AG04449 (cell line): ENCODE measurements at regions of chr19 and their contacts with region 1.

Region 1: GRCh38 chr19:40633207-40633606 is 32.0 kb downstream of the LTBP4 start:
- DNase-seq: peak; percentile 26
- H3K4me3 ChIP-seq: no peak overlapping the region
- CTCF ChIP-seq: no peak

Region 2: DNA sequence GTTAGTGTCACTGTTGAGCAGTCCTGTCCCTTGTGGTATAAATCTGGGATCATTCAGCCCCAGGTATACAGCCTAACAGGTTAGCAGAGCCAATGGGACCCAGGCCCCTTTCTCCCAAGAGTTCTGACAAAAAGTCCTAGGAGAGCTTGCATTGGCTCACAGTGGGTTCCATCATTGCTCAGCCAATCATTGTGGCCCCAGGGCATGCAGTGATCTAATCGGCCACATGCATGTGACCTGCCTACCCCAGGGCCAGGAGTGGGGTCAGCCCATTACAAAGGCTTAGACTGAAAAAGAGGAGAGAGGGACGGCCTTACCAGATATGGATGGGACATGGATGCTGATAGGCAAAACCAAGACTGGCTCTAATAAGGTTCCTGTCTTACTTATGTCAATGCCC is 125.3 kb before region 1 on chr19:
- CTCF ChIA-PET with region 1: no interaction called
- POLR2A ChIA-PET with region 1: no interaction called
- DNase-seq: no peak
- H3K4me3 ChIP-seq: no peak overlapping the region
- CTCF ChIP-seq: no peak

Region 3: GRCh38 chr19:40523322-40524047 is 109.7 kb before region 1 on chr19:
- CTCF ChIA-PET with region 1: interaction called, 28 read pairs
- POLR2A ChIA-PET with region 1: no interaction called
- DNase-seq: no peak
- H3K4me3 ChIP-seq: no peak overlapping the region
- CTCF ChIP-seq: peak; percentile 78

Region 4: GRCh38 chr19:40529093-40529954 is 103.9 kb before region 1 on chr19:
- CTCF ChIA-PET with region 1: interaction called, 28 read pairs
- POLR2A ChIA-PET with region 1: no interaction called
- DNase-seq: no peak
- H3K4me3 ChIP-seq: peak overlapping the region; percentile 54
- CTCF ChIP-seq: peak; percentile 97

Region 5: GRCh38 chr19:40598121-40598917 is 34.9 kb before region 1 on chr19:
- CTCF ChIA-PET with region 1: interaction called, 63 read pairs
- POLR2A ChIA-PET with region 1: interaction called, 3 read pairs
- DNase-seq: no peak
- H3K4me3 ChIP-seq: peak overlapping the region; percentile 65
- CTCF ChIP-seq: peak; percentile 97

Region 6: DNA sequence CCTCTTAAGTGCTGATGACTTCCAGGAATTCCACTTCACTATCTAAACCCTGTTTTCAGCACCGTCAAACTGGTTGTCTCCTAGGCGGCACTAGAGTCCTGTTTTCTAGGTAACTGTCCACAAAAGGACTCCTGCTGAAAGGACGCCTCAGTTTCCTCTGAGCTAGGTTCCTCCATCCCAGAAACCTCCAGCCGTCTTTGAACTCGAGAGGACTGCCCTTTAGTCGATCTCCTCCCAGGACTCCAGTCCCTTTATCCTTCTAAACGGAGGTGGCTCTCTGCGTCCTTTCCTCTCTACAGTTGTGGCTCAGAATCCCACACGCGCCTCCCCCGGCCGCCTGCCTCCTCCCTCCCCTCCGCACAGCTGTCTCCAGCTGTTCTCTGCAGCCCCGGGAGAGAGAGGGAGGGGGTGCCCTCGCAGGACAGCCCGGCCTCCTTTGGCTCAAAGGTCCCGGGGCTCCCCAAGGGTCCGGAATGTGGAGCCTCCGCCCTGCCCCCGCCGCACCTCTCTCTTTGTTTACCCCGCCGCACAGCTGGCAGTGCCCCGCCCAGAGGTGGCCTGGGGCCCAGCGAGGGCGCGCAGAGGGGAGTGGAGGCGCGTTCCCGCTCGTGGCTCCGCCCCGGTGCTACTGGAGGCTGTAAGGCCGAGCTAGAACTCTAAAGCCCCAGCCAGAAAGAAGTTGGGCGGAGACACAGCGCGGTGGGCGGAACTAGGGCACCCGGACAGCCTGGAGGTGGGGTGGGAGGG is 29.6 kb before region 1 on chr19:
- CTCF ChIA-PET with region 1: interaction called, 63 read pairs
- POLR2A ChIA-PET with region 1: interaction called, 3 read pairs
- DNase-seq: no peak
- H3K4me3 ChIP-seq: peak overlapping the region; percentile 53
- CTCF ChIP-seq: no peak

Region 7: DNA sequence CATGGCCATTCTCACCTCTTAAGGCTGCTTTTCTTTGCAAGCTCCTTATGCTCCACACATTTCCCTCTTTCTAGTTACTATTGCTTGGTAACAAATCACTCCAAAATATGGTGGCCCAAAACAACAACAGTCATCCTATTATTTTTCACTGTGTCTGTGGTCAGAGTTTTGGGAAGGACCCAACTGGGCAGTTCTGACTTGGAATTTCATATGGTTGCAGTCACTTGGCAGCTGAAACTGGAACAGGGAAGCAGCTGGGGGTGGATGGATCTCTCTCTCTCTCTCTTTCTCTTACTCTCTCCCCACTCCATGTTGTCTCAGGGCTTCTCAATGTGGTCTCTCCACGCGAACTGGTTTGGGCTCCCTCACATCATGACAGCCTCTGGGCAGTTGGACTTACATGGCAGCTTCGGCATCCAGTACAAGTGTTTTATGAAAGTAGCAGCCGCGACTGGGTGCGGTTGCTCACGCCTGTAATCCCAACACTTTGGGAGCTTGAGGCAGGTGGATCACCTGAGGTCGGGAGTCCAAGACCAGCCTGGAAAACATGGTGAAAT is 17.6 kb after region 1 on chr19:
- CTCF ChIA-PET with region 1: interaction called, 139 read pairs
- POLR2A ChIA-PET with region 1: interaction called, 4 read pairs
- DNase-seq: no peak
- H3K4me3 ChIP-seq: no peak overlapping the region
- CTCF ChIP-seq: no peak

Region 8: DNA sequence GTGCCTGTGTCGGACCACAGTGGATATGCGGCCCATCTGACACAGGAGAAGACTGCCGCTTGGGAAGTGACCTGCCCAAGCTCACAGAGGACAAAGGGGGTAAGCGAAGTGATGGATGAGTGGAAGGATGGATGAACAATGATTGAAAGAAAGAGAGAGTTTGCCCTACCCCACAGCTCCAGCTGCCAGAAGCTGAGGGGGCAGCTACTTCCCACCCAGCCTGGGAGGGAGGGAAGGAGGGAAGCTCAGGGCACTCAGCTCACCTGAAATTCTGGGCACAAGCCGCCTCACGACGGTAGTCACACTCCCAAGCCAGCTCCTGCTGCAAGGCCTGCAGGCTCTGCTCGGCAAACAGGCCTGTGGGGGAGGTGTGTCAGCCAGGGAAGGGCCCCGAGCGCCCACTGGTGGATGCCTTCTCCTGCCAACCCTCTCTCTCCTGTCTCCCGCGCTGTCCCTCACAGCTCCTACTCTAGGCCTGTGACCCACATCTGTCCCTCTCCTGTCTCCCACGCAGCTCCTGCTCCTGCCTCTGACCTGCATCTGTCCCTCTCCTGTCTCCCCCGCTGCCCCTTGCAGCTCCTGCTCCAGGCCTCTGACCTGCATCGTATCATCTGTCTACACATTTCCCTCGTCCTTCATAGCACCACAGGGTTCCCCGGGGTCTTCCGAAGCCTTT is 69.3 kb after region 1 on chr19:
- CTCF ChIA-PET with region 1: no interaction called
- POLR2A ChIA-PET with region 1: no interaction called
- DNase-seq: no peak
- H3K4me3 ChIP-seq: no peak overlapping the region
- CTCF ChIP-seq: peak; percentile 59